ENCODE measurements at regions of chr1 and their contacts with region 1.

Region 1: GRCh38 chr1:39901698-39902459 is at the start of gene MYCL:
- DNase-seq: no peak
- ATAC-seq: peak; percentile 92
- H3K4me3 ChIP-seq: peak within 1 kb of the TSS; percentile 52 to 60
- H3K27ac ChIP-seq: no peak within 1 kb of the TSS
- H3K4me1 ChIP-seq: peaks cover 9% of the 10 kb centered on the region
- H3K27me3 ChIP-seq: peaks cover 16% of the 10 kb centered on the region
- CTCF ChIP-seq: peak; percentile 90
- total RNA-seq, gene MYCL: 2.0 TPM

Region 2: GRCh38 chr1:39683591-39684312 is 218.1 kb before region 1 on chr1:
- CTCF ChIA-PET with region 1: no interaction called
- POLR2A ChIA-PET with region 1: no interaction called
- in situ Hi-C with region 1: no loop called
- intact Hi-C with region 1: no loop called
- DNase-seq: no peak
- ATAC-seq: no peak
- H3K4me3 ChIP-seq: no peak overlapping the region
- H3K27ac ChIP-seq: no peak overlapping the region
- H3K4me1 ChIP-seq: no peaks in the 10 kb centered on the region
- H3K27me3 ChIP-seq: no peaks in the 10 kb centered on the region; the same call in 1 of the 2 replicates
- CTCF ChIP-seq: no peak

Region 3: GRCh38 chr1:39816415-39817090 is 85.3 kb before region 1 on chr1:
- CTCF ChIA-PET with region 1: interaction called, 11 read pairs
- POLR2A ChIA-PET with region 1: interaction called, 3 read pairs
- in situ Hi-C with region 1: no loop called
- intact Hi-C with region 1: loop called (anchors 5 kb)
- DNase-seq: peak; percentile 77
- ATAC-seq: peak; percentile 87
- H3K4me3 ChIP-seq: no peak overlapping the region
- H3K27ac ChIP-seq: no peak overlapping the region
- H3K4me1 ChIP-seq: no peaks in the 10 kb centered on the region
- H3K27me3 ChIP-seq: no peaks in the 10 kb centered on the region
- CTCF ChIP-seq: peak; percentile 92

Region 4: GRCh38 chr1:39919545-39919944 is 17.7 kb after region 1 on chr1:
- CTCF ChIA-PET with region 1: interaction called, 10 read pairs
- POLR2A ChIA-PET with region 1: no interaction called
- in situ Hi-C with region 1: no loop called
- intact Hi-C with region 1: no loop called
- DNase-seq: peak; percentile 45
- ATAC-seq: peak; percentile 97
- H3K4me3 ChIP-seq: no peak overlapping the region
- H3K27ac ChIP-seq: no peak overlapping the region
- H3K4me1 ChIP-seq: no peaks in the 10 kb centered on the region
- H3K27me3 ChIP-seq: no peaks in the 10 kb centered on the region
- CTCF ChIP-seq: peak; percentile 84; the same call in 1 of the 2 replicates

Measured in Panc1 (cell line).